Activated B cell treated with CpG ODN at 0.5 μM for 24 hours (primary cell): ENCODE measurements at regions of chr19 and their contacts with region 1.

Region 1: DNA sequence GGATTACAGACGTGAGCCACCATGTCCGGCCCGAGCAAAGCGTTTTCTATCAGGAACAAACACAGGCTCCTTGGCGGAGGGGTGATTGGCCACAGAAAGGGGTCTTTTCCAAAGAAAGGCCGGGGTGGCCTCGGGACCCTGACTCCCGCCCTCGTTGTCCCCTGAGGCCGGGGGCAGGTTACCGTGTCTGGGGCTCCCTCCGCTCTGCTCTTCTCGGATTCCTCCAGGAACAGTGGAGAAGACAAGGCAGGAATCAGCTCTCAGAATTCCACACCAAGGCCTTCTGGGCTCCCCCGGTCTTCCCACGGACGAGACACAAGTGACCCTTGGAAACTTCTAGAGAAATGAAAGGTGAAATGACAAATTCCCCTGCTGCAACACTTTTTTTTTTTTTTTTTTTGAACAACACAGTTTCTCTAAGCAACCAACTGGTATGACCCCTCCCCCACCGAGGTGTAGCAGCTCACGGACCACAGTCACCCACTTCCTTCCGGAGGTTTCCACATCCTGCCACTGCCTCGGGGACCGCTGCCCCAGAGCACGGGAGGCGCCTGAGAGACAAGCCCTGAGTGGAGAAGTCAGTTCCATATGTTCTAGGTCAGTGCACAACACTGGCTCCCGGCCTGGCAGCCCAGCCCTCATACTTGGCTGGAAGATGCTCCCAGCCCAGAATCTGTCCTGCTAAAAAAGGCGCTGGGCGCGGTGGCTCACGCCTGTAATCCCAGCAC is 11.0 kb downstream of the MOB3A start:
- DNase-seq: peak; percentile 80
- ATAC-seq: peak; percentile 23
- H3K4me3 Mint-ChIP-seq: peak overlapping the region; percentile 97
- H3K27ac Mint-ChIP-seq: peak overlapping the region; percentile 99
- H3K4me1 Mint-ChIP-seq: peaks cover 88% of the 10 kb centered on the region
- H3K27me3 Mint-ChIP-seq: no peaks in the 10 kb centered on the region
- CTCF ChIP-seq: no peak

Region 2: GRCh38 chr19:2016041-2016807 is 68.9 kb before region 1 on chr19:
- CTCF ChIA-PET with region 1: interaction called, 4 read pairs
- POLR2A ChIA-PET with region 1: interaction called, 10 read pairs
- intact Hi-C with region 1: no loop called
- DNase-seq: no peak
- ATAC-seq: peak; percentile 73
- H3K4me3 Mint-ChIP-seq: peak overlapping the region; percentile 60
- H3K27ac Mint-ChIP-seq: peak overlapping the region; percentile 56
- H3K4me1 Mint-ChIP-seq: peaks cover 29% of the 10 kb centered on the region
- H3K27me3 Mint-ChIP-seq: no peaks in the 10 kb centered on the region
- CTCF ChIP-seq: no peak

Region 3: DNA sequence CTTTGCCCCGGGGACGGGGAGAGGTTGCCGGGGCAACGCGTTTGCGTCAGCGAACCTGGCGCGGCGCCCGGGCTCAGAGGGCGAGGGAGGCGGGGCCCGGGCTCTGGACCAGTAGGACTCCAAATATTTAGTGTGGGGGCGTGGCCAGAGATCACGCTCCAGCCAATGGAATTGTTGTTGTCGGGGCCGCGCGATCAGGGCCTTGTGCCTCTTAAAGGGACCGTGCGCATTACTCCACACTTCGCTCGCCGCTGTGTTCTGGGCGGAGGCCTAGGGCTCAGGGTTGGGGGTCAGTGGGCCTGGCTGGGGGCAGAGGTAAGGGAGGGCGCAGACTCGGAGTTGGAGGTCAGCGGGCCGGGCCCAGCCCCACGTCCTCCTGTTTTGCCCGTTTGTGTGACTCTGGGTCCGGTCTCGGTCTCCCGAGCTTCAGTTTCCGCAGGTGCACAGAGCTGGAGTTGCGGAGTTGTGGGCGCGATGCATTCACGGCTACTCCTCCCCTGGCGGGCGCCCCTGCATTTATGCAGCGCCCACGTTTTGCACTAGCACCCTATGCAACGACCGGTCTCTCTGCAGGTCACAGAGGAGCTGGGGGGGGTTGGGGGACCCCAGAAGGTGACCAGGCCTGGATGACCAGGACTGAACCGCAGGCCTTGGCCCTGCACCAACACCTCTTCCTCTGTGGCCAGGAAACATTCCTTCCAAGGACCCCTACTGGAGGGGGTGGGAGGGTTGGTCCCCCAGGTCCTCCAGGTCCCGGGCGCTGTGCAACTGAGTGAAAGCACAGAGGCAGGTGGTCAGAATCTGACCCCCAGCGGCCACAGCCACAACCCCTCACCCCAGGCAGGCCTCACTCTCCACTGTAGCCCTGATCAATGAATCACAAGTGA is 23.4 kb before region 1 on chr19:
- CTCF ChIA-PET with region 1: no interaction called
- POLR2A ChIA-PET with region 1: interaction called, 2,723 read pairs
- intact Hi-C with region 1: loop called (anchors 1 kb)
- DNase-seq: peak; percentile 100
- ATAC-seq: peak; percentile 90
- H3K4me3 Mint-ChIP-seq: peak overlapping the region; percentile 87
- H3K27ac Mint-ChIP-seq: peak overlapping the region; percentile 88
- H3K4me1 Mint-ChIP-seq: peaks cover 48% of the 10 kb centered on the region
- H3K27me3 Mint-ChIP-seq: no peaks in the 10 kb centered on the region
- CTCF ChIP-seq: no peak

Region 4: DNA sequence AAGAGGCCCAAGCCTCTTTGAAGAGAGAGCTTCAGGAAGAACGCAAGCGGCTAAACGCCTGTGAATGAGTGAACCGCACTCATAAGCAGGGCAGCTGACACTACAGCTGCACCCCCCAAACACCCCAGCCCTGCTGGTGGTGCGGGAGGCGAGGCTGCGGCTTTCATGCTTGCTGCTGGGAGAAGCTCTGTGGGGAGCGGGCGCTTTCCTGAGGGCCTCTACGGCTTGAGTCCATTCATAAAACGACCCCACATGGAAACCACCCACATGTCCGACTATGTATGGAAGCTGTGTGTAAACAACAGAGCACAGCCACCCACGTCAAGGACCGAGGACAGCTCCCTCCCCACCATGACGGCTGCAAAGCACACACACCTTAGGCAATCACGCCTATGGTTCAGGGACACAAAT is 60.7 kb after region 1 on chr19:
- CTCF ChIA-PET with region 1: no interaction called
- POLR2A ChIA-PET with region 1: interaction called, 13 read pairs
- intact Hi-C with region 1: no loop called
- DNase-seq: no peak
- ATAC-seq: no peak
- H3K4me3 Mint-ChIP-seq: no peak overlapping the region
- H3K27ac Mint-ChIP-seq: no peak overlapping the region
- H3K4me1 Mint-ChIP-seq: peaks cover 50% of the 10 kb centered on the region
- H3K27me3 Mint-ChIP-seq: no peaks in the 10 kb centered on the region
- CTCF ChIP-seq: no peak

Region 5: DNA sequence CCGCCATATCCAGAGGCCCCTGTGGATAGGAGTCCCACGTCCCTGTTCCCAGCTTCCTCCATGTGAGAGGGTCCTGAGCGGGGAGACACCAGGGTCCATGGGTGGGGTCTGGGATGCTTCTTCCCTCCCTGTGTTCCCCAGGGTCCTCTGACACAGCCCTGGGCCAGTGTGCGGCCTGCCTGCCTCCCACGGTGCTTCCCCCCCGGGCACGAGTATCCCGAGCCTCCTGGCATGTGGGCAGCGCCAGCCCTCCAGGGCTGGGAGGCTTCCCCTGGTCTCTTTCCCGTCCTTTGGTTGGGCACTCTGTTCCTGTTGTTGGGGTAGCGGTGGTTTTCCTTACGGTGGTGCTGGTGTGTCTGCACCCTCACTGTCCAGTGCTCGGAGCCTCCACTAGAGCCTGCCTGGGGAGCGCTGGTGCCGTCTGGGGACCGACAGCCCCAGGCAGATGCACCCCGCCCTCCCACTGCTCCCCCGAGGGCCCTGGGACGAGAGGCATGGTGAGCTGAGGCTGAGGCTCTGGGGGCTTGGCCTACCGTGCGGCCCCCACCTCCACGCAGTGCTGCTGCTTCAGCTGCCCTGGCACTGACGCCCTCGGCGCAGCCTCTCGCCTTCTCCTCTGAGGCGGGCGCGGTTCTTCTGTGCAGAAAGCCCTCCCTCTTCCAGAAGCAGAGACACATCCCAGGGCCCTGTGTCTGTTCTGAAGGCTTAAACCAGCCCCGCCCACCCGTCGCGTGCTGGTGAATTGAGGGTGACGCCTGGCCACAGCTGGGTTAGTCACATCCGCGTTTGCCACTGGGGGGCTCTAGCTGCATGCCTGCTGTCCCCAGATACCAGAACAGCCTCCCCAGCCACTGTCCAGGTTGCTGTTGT is 123.1 kb after region 1 on chr19:
- CTCF ChIA-PET with region 1: no interaction called
- POLR2A ChIA-PET with region 1: no interaction called
- intact Hi-C with region 1: no loop called
- DNase-seq: no peak
- ATAC-seq: peak; percentile 76
- H3K4me3 Mint-ChIP-seq: no peak overlapping the region
- H3K27ac Mint-ChIP-seq: no peak overlapping the region
- H3K4me1 Mint-ChIP-seq: peaks cover 6% of the 10 kb centered on the region
- H3K27me3 Mint-ChIP-seq: no peaks in the 10 kb centered on the region
- CTCF ChIP-seq: no peak

Region 6: DNA sequence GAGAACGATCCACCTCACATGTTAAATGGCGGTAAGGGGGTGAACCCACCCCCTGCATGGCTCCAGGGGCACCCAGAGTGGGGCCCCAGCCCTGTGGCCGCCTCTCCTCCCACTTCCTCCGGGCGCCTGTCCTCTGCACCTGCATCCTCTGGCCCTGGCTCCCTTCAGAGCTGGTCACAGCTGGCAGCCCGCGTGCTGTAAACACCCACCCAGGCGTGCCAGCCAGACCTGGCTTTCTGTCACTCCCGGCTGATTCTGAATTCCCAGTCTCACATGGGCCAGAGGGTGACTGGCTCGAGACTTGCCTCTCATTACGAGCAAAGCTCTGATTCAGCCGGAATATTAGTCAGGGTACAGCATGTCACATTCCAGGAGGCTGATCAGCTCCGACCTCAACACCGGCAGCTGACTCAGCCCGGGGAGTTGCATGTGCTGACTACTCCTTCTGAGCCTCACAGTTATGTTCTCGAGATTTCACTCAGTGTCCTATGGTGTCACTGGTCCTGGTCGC is 542.2 kb after region 1 on chr19:
- CTCF ChIA-PET with region 1: interaction called, 3 read pairs
- POLR2A ChIA-PET with region 1: interaction called, 3 read pairs
- intact Hi-C with region 1: loop called (anchors 5 kb)
- DNase-seq: peak; percentile 68
- ATAC-seq: peak; percentile 62
- H3K4me3 Mint-ChIP-seq: peak overlapping the region; percentile 76
- H3K27ac Mint-ChIP-seq: peak overlapping the region; percentile 94
- H3K4me1 Mint-ChIP-seq: peaks cover 95% of the 10 kb centered on the region
- H3K27me3 Mint-ChIP-seq: no peaks in the 10 kb centered on the region
- CTCF ChIP-seq: no peak